ENCODE measurements at regions of chr22 and their contacts with region 1.

Region 1: GRCh38 chr22:29848111-29848510 is 10.0 kb upstream of the ASCC2 start:
- DNase-seq: no peak
- H3K4me3 ChIP-seq: no peak overlapping the region
- H3K27ac ChIP-seq: no peak overlapping the region
- H3K4me1 ChIP-seq: no peaks in the 10 kb centered on the region
- H3K27me3 ChIP-seq: no peaks in the 10 kb centered on the region
- CTCF ChIP-seq: no peak

Region 2: DNA sequence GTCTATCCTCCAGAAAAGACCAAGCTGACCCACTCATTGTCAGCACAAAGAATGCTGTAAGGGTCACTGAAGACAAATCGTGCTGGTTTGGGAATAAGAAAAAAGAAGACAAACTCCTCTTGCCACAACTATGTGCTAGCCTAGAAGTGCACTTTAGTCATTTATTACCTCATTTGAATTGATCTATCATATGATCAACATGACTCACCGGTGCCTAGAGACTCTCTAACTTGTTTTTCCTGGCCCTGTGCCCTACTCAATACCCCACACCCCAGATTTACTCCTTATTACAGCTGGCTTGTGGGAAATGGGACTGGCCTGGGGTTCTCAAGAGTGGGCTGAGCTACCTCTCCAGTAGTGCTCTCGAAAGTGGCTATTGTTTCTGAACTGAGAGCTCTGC is 196.3 kb after region 1 on chr22:
- CTCF ChIA-PET with region 1: no interaction called
- POLR2A ChIA-PET with region 1: interaction called, 15 read pairs
- intact Hi-C with region 1: no loop called
- DNase-seq: peak; percentile 51
- H3K4me3 ChIP-seq: no peak overlapping the region
- H3K27ac ChIP-seq: no peak overlapping the region
- H3K4me1 ChIP-seq: peaks cover 32% of the 10 kb centered on the region
- H3K27me3 ChIP-seq: no peaks in the 10 kb centered on the region
- CTCF ChIP-seq: no peak

Region 3: GRCh38 chr22:30742291-30743256 is 894.5 kb after region 1 on chr22:
- CTCF ChIA-PET with region 1: no interaction called
- POLR2A ChIA-PET with region 1: no interaction called
- intact Hi-C with region 1: no loop called
- DNase-seq: no peak
- H3K4me3 ChIP-seq: no peak overlapping the region
- H3K27ac ChIP-seq: no peak overlapping the region
- H3K4me1 ChIP-seq: no peaks in the 10 kb centered on the region
- H3K27me3 ChIP-seq: no peaks in the 10 kb centered on the region
- CTCF ChIP-seq: no peak